ENCODE measurements at regions of chr7 and their contacts with region 1.

Region 1: DNA sequence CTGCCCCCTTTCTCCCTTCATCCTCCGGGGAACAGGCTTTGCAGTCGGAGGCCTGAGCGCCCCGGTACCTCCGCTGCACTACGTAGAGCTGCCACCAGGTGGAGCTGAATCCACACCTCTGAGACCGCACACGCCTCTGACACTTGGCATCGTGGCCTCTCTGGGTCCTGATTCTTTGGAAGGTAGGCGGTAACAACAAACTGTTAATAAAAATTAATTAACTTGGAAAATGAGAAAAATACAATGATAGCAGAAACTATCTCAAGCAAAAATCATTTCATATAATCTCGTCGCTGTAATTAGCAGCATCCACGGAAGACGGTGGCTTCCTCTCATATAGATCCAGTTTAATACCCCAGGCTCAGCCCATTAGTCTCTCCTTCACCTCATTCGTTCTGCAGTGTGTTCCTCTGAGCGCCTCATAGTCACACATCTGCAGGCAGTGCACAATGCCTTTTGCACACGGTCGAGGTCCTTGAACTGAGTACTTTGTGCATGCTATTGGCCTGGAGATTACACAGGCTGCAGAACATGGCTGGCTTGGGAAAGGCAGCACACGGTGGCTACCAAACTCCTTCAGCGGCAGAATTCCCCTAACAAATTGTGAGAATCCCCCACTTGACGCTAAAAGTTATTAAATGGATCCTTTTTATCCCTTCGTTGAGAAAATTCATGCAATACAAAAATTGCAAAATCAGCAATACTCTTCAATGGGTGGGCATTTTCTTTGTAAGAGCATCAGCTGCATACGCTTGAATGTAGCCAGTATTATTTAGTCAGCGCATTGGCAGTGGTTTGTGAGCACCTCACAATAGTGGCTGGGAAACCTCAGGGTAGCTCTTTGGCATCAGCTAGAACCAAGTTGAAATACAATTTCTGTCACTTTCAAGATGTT is 18.7 kb downstream of the OR9A2 start:
- DNase-seq: peak; percentile 88
- ATAC-seq: peak; percentile 96
- H3K4me3 ChIP-seq: no peak overlapping the region
- H3K4me3 Mint-ChIP-seq: no peak overlapping the region
- H3K27ac ChIP-seq: no peak overlapping the region
- H3K27ac Mint-ChIP-seq: no peak overlapping the region
- H3K4me1 ChIP-seq: peaks cover 36 to 49% of the 10 kb centered on the region in 2 donors
- H3K4me1 Mint-ChIP-seq: peaks cover 49% of the 10 kb centered on the region
- H3K27me3 ChIP-seq: no peaks in the 10 kb centered on the region
- H3K27me3 Mint-ChIP-seq: no peaks in the 10 kb centered on the region
- CTCF ChIP-seq: peak; percentile 92

Region 2: GRCh38 chr7:142438235-142438922 is 569.9 kb before region 1 on chr7:
- CTCF ChIA-PET with region 1: no interaction called
- POLR2A ChIA-PET with region 1: no interaction called
- intact Hi-C with region 1: no loop called
- DNase-seq: peak; percentile 8
- ATAC-seq: no peak
- H3K4me3 ChIP-seq: no peak overlapping the region
- H3K4me3 Mint-ChIP-seq: no peak overlapping the region
- H3K27ac ChIP-seq: no peak overlapping the region
- H3K27ac Mint-ChIP-seq: no peak overlapping the region
- H3K4me1 ChIP-seq: peaks cover 3 to 13% of the 10 kb centered on the region in 2 donors
- H3K4me1 Mint-ChIP-seq: peaks cover 19% of the 10 kb centered on the region
- H3K27me3 ChIP-seq: no peaks in the 10 kb centered on the region
- H3K27me3 Mint-ChIP-seq: peaks cover 42% of the 10 kb centered on the region
- CTCF ChIP-seq: no peak

Region 3: DNA sequence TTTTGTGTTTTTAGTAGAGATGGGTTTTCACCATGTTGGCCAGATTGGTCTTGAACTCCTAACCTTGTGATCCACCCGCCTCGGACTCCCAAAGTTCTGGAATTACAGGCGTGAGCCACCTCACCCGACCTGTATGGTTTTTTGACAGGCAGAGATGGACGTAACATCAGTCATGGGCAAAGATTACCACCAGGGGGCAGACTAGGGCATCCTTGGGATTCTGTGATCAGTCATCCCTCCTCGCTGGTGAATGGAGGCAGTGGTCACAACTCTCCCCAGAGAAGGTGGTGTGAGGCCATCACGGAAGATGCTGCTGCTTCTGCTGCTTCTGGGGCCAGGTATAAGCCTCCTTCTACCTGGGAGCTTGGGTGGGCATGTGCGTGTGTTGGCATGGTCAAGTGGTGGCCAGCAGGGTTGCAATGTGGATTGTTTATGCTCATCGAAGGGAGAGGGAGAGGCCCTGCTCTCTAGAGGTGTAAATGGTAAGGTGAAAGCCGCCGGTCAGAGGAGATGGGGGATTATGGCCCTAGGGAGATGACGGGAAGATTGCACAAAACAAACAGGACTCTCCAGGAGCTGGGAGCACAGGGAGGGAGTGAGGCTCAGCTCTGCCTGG is 381.7 kb before region 1 on chr7:
- CTCF ChIA-PET with region 1: interaction called, 133 read pairs
- POLR2A ChIA-PET with region 1: no interaction called
- intact Hi-C with region 1: no loop called
- DNase-seq: peak; percentile 71
- ATAC-seq: peak; percentile 66
- H3K4me3 ChIP-seq: no peak overlapping the region
- H3K4me3 Mint-ChIP-seq: no peak overlapping the region
- H3K27ac ChIP-seq: no peak overlapping the region
- H3K27ac Mint-ChIP-seq: no peak overlapping the region
- H3K4me1 ChIP-seq: no peaks in the 10 kb centered on the region
- H3K4me1 Mint-ChIP-seq: peaks cover 3% of the 10 kb centered on the region
- H3K27me3 ChIP-seq: peaks cover 0 to 16% (median 0%) of the 10 kb centered on the region in 4 experiments
- H3K27me3 Mint-ChIP-seq: peaks cover 36% of the 10 kb centered on the region
- CTCF ChIP-seq: peak; percentile 78

Region 4: DNA sequence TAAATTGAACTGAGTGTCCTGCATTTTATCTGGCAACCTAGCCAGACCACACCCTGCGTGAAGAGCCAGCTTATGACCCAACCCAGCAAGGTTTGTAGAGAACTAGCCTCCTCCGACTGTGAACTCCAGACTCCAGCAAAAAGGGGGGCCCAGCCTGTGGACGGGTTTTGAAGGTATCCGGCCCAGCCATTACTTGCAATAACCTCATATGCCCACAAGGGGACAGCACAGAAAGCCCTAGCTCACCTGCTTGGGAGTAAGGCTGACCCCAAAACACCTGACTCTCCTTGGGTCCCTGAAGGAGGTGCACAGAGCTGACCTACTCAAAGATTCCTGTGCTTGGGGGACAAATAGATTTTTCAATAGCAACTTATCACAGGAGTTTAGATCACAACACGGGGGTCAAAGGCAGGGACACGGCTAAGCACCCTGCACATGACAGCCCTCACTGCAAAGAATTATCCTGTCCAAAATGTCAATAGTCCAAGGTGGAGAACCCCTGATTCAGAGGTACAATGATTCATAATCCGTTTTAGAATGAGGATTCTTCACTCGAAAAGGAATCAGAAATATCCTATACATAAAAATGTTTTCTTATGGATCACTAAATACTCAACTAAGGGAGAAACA is 127.3 kb before region 1 on chr7:
- CTCF ChIA-PET with region 1: interaction called, 10 read pairs
- POLR2A ChIA-PET with region 1: no interaction called
- intact Hi-C with region 1: no loop called
- DNase-seq: peak; percentile 70
- ATAC-seq: peak; percentile 81
- H3K4me3 ChIP-seq: no peak overlapping the region
- H3K4me3 Mint-ChIP-seq: no peak overlapping the region
- H3K27ac ChIP-seq: no peak overlapping the region
- H3K27ac Mint-ChIP-seq: no peak overlapping the region
- H3K4me1 ChIP-seq: no peaks in the 10 kb centered on the region
- H3K4me1 Mint-ChIP-seq: no peaks in the 10 kb centered on the region
- H3K27me3 ChIP-seq: peaks cover 0 to 8% (median 1%) of the 10 kb centered on the region in 4 experiments
- H3K27me3 Mint-ChIP-seq: peaks cover 13% of the 10 kb centered on the region
- CTCF ChIP-seq: peak; percentile 92

Region 5: DNA sequence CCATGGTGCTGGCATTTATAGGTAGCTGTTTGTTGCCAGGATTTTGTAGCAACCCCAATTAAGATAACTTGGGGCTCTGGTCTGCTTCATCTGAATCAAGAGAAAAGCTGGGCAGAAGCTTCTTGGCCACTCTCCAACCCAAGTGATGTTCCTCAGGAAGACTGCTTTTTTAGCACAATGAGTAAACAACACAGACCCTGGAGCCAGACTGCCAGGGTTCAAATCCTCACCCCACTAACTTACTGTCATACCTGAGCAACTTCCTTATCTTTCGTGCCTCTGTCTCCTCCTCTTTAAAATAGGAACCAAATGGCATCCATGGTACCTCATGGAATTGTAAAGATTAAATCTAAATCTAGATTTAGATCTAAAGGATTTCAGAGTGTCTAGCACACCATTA is 57.0 kb before region 1 on chr7:
- CTCF ChIA-PET with region 1: no interaction called
- POLR2A ChIA-PET with region 1: no interaction called
- intact Hi-C with region 1: no loop called
- DNase-seq: no peak
- ATAC-seq: no peak
- H3K4me3 ChIP-seq: no peak overlapping the region
- H3K4me3 Mint-ChIP-seq: no peak overlapping the region
- H3K27ac ChIP-seq: no peak overlapping the region
- H3K27ac Mint-ChIP-seq: no peak overlapping the region
- H3K4me1 ChIP-seq: no peaks in the 10 kb centered on the region
- H3K4me1 Mint-ChIP-seq: no peaks in the 10 kb centered on the region
- H3K27me3 ChIP-seq: peaks cover 0 to 7% (median 0%) of the 10 kb centered on the region in 4 experiments
- H3K27me3 Mint-ChIP-seq: peaks cover 22% of the 10 kb centered on the region
- CTCF ChIP-seq: no peak

Region 6: GRCh38 chr7:142992464-142992863 is 15.8 kb before region 1 on chr7:
- CTCF ChIA-PET with region 1: interaction called, 11 read pairs
- POLR2A ChIA-PET with region 1: no interaction called
- intact Hi-C with region 1: no loop called
- DNase-seq: no peak
- ATAC-seq: no peak
- H3K4me3 ChIP-seq: no peak overlapping the region
- H3K4me3 Mint-ChIP-seq: no peak overlapping the region
- H3K27ac ChIP-seq: no peak overlapping the region
- H3K27ac Mint-ChIP-seq: no peak overlapping the region
- H3K4me1 ChIP-seq: no peaks in the 10 kb centered on the region
- H3K4me1 Mint-ChIP-seq: peaks cover 10% of the 10 kb centered on the region
- H3K27me3 ChIP-seq: no peaks in the 10 kb centered on the region
- H3K27me3 Mint-ChIP-seq: peaks cover 24% of the 10 kb centered on the region
- CTCF ChIP-seq: no peak

Region 7: GRCh38 chr7:143063741-143064140 is 55.5 kb after region 1 on chr7:
- CTCF ChIA-PET with region 1: no interaction called
- POLR2A ChIA-PET with region 1: no interaction called
- intact Hi-C with region 1: no loop called
- DNase-seq: no peak
- ATAC-seq: no peak
- H3K4me3 ChIP-seq: no peak overlapping the region
- H3K4me3 Mint-ChIP-seq: no peak overlapping the region
- H3K27ac ChIP-seq: no peak overlapping the region
- H3K27ac Mint-ChIP-seq: no peak overlapping the region
- H3K4me1 ChIP-seq: peaks cover 7 to 8% of the 10 kb centered on the region in 2 donors
- H3K4me1 Mint-ChIP-seq: peaks cover 9% of the 10 kb centered on the region
- H3K27me3 ChIP-seq: no peaks in the 10 kb centered on the region
- H3K27me3 Mint-ChIP-seq: no peaks in the 10 kb centered on the region
- CTCF ChIP-seq: no peak

Region 8: GRCh38 chr7:143117395-143117794 is 109.1 kb after region 1 on chr7:
- CTCF ChIA-PET with region 1: no interaction called
- POLR2A ChIA-PET with region 1: no interaction called
- intact Hi-C with region 1: no loop called
- DNase-seq: no peak
- ATAC-seq: no peak
- H3K4me3 ChIP-seq: no peak overlapping the region
- H3K4me3 Mint-ChIP-seq: no peak overlapping the region
- H3K27ac ChIP-seq: no peak overlapping the region
- H3K27ac Mint-ChIP-seq: no peak overlapping the region
- H3K4me1 ChIP-seq: peaks cover 17 to 19% of the 10 kb centered on the region in 2 donors
- H3K4me1 Mint-ChIP-seq: peaks cover 28% of the 10 kb centered on the region
- H3K27me3 ChIP-seq: no peaks in the 10 kb centered on the region
- H3K27me3 Mint-ChIP-seq: peaks cover 3% of the 10 kb centered on the region
- CTCF ChIP-seq: no peak